Activated CD8-positive, alpha-beta T cell treated with anti-CD3 and anti-CD28 coated beads, Interleukin-2, amount 10 ng/mL, durations not matched to agents 7 days and 5 days (primary cell): ENCODE measurements at regions of chr7 and their contacts with region 1.

Region 1: DNA sequence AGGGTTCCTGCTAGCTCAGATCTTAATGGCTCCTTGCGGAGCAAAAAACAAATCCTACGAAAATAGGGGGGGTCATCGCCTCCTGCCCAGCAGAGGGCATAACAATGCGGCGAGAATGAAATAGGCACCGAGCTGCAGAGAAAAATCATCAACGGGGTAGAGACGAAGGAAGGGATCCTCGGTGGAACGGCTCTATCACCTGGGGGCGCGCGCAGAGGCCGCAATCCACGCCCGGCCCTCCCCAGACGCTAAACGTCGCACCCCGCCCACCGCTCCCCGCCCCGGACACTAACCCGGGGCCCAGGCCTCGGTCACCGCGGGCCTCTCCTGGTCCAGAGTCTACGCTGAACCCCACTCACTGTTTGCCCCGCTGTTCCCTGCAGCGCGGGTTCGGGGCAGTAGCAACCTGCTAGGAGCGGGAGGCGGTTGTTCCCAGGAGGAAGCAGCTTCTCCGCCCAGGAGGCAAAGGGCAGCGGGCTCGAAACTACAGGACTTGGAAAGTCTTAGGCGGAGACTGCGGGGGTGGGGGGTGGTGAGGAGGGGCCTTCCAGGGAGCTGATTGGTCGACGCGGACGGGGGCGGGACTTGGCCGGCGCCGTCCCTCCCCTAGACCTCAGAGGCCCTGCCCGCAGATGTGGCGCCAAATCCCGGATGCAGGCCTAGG is at the start of gene TCAF1:
- DNase-seq: peak; percentile 91
- ATAC-seq: peak; percentile 96
- H3K4me3 Mint-ChIP-seq: peak within 1 kb of the TSS; percentile 91
- H3K27ac Mint-ChIP-seq: peak within 1 kb of the TSS; percentile 84
- H3K4me1 Mint-ChIP-seq: peaks cover 21% of the 10 kb centered on the region
- H3K27me3 Mint-ChIP-seq: no peaks in the 10 kb centered on the region
- total RNA-seq, gene TCAF1: 12.6 to 14.1 TPM

Region 2: DNA sequence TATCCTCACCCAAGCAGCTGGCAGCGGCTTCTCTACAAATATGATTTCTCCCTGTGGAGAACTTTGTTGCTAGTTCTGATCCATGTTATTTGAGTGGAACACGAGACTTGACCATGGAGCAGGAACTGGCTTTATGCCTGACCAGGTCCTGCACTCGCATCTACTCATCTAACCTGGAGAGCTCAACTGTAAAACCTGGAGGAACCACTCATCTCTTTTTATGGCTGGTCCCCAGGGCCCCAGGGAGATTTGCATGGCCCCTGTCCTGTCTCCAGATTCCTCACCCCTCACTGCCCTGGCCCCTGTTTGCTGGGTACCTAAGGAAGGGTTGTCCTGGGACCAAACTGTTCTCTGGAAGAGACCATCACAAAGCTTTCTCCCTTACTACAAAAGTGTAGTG is 15.8 kb before region 1 on chr7:
- CTCF ChIA-PET with region 1: interaction called, 14 read pairs
- POLR2A ChIA-PET with region 1: interaction called, 4 read pairs
- DNase-seq: no peak
- ATAC-seq: no peak
- H3K4me3 Mint-ChIP-seq: no peak overlapping the region
- H3K27ac Mint-ChIP-seq: no peak overlapping the region
- H3K4me1 Mint-ChIP-seq: peaks cover 15% of the 10 kb centered on the region
- H3K27me3 Mint-ChIP-seq: peaks cover 22% of the 10 kb centered on the region

Region 3: DNA sequence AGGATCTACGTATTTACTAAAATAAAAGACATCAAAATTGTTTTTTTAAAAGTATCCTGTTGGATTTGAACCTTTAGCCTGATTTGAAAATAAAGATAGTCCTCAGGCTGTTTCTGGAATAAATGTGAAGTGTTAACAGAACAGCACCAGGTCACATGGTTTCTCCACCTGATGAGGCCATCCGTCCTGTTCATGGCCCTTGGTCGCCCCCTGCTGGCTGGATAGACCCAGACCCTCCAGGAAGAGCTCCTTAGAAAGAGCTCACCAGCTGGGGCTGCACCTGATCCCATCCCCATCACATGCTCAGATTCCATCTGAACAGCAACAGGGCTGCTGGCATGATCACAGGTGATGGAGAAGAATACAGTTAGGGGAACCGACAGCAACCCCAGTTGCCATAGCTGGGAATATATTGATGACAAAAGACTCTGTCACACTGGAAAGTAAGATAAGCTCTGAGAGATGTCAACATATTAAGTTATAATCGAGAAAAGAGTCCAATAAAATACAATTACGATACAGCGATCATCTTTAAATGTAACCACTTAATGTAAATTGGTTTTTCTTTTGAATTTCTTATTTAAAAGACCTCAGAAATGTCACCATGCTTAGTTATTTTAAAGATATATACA is 226.0 kb after region 1 on chr7:
- CTCF ChIA-PET with region 1: interaction called, 21 read pairs
- POLR2A ChIA-PET with region 1: no interaction called
- DNase-seq: peak; percentile 92
- ATAC-seq: peak; percentile 99
- H3K4me3 Mint-ChIP-seq: no peak overlapping the region
- H3K27ac Mint-ChIP-seq: no peak overlapping the region
- H3K4me1 Mint-ChIP-seq: no peaks in the 10 kb centered on the region
- H3K27me3 Mint-ChIP-seq: no peaks in the 10 kb centered on the region